ENCODE measurements at regions of chr1 and their contacts with region 1.

Region 1: GRCh38 chr1:27192039-27192529 is 37.2 kb upstream of the SLC9A1 start:
- DNase-seq: peak in 3 of 4 experiments; percentile 20 to 56 (median 49)
- ATAC-seq: peak; percentile 59
- H3K4me3 ChIP-seq: no peak overlapping the region
- H3K27ac ChIP-seq: no peak overlapping the region
- H3K4me1 ChIP-seq: peaks cover 7 to 22% of the 10 kb centered on the region in 2 experiments
- H3K27me3 ChIP-seq: no peaks in the 10 kb centered on the region; a peak in 1 of 5 replicates
- CTCF ChIP-seq: no peak
- EP300 ChIP-seq: no peak
- POLR2A ChIP-seq: no peak
- RAD21 ChIP-seq: no peak

Region 2: DNA sequence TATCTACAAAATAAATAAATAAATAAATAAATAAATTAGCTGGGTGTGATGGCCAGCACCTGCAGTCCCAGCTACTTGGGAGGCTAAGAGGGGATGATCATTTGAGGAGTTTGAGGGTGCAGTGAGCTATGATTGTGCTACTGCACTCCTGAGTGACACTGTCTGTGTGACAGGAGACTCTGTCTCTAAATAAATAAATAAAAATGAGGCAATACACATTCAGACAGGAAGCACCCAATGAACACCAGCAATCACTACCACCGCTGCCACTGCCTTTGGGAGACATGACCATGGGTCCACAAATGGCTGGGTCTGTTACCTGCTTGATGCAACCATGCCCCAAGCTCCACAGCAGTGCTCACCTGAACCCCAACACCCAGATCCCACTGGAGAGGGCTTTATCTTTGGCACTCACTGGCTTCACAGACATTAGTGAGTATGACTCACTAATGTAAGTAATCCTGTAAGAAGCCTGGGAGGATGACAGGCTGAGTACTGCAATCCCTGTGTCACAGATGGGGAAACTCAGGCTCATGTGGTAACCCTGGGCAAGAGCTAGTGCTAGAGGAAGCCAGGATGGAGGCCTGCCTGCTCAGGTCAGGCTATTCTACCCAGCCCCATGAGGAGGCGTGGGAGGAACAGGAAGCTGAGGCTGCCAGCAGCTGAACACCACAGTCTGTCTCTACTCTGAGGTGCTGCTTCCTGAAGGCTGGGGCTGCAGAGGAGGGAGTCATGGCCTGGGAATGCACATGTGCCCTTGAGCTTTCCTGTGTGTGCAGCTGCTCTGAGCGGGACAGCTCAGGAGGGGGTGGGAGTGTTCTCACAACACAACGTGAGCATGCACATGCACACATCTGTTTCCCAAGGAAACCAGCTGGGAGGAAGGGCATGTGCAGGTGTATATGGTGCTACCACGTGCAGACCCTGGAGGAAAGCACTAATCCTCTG is 80.2 kb before region 1 on chr1:
- CTCF ChIA-PET with region 1: no interaction called
- POLR2A ChIA-PET with region 1: interaction called, 3 read pairs
- in situ Hi-C with region 1: loop called (anchors 5 kb)
- intact Hi-C with region 1: loop called (anchors 2 kb)
- DNase-seq: peak; percentile 52 to 78 (median 60)
- ATAC-seq: peak; percentile 75
- H3K4me3 ChIP-seq: no peak overlapping the region
- H3K27ac ChIP-seq: peak overlapping the region; percentile 8; the same call in 1 of the 3 replicates
- H3K4me1 ChIP-seq: peaks cover 34 to 53% of the 10 kb centered on the region in 2 experiments
- H3K27me3 ChIP-seq: no peaks in the 10 kb centered on the region
- CTCF ChIP-seq: peak; percentile 39 to 71 (median 40); a peak in 3 of 6 replicates
- EP300 ChIP-seq: peak; percentile 49; the same call in 1 of the 2 replicates
- POLR2A ChIP-seq: no peak
- RAD21 ChIP-seq: peak; percentile 77 to 83

Measured in K562 (cell line).